ENCODE measurements at regions of chr22 and their contacts with region 1.

Region 1: DNA sequence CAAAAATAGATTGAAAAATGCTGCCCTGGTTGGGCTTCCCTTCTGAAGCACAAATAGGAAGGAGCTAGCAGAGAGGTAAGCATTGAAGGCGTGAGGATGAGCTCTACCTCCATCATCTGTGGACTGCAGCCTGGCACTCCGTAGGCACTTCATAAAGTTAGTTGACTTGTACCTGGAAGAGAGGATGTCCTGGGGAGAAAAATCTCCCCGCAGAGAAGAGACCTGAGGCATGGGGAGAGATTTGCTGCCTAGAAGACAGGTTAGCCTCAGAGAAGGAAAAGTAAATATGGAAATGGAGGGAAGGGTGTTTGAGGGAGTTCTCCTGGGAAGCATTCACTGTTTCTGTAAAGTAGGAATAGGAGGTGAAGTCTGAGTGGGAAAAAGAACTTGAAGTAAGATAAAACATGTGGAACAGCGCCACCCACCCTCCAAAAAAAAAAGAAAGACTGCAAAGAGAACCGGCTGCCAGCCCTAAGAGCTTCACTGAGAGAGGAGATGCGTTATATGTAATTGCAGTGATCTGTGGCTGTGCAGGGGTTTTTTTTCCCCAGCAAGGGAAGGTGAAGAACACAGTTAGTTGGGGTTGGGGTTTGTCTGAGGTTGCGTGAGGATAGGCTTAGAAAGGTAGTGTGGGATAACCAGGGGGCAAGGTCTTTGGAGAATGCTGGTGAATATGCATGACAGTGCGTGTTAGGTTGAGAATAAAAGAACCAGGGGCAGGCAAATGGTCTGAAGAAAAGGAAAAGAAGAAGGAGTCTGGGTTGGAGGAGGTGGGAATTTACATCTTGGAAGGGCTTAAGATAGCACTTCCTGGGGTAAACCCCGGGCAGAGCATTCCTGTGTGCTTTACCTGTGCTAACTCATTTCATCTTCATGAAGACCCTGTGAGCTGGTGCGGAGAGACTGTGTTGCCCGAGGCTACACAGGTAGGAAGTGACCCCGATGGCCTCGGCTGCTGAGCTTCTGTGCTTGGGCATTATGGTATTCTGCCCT is 16.0 kb downstream of the TNRC6B start:
- DNase-seq: no peak
- H3K4me3 ChIP-seq: no peak overlapping the region
- CTCF ChIP-seq: peak; percentile 10

Region 2: DNA sequence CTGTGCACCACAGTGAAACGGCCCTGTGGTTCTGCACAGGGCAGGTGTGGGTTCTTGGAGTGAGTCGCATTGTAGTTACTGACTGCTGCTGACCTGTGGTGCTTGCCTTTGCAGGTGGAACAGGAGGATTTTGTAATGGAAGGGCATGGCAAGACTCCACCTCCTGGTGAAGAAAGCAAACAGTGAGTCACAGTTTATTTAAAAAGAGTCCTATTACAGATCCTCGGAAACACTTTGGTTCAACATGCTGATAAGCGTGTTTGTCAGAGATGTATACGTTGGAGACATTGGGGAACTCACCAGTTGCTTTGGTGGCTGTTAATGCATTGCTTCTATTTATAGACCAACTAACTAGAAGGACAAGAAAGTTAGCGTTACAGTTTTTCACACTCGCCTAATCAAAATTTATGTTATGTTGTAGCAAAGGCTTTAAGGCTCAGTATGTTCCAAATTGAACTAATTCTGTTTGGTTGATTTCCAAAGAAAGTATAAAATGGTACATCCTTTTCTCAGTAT is 37.7 kb before region 1 on chr22:
- CTCF ChIA-PET with region 1: no interaction called
- POLR2A ChIA-PET with region 1: no interaction called
- DNase-seq: no peak
- H3K4me3 ChIP-seq: no peak overlapping the region
- CTCF ChIP-seq: no peak

Region 3: DNA sequence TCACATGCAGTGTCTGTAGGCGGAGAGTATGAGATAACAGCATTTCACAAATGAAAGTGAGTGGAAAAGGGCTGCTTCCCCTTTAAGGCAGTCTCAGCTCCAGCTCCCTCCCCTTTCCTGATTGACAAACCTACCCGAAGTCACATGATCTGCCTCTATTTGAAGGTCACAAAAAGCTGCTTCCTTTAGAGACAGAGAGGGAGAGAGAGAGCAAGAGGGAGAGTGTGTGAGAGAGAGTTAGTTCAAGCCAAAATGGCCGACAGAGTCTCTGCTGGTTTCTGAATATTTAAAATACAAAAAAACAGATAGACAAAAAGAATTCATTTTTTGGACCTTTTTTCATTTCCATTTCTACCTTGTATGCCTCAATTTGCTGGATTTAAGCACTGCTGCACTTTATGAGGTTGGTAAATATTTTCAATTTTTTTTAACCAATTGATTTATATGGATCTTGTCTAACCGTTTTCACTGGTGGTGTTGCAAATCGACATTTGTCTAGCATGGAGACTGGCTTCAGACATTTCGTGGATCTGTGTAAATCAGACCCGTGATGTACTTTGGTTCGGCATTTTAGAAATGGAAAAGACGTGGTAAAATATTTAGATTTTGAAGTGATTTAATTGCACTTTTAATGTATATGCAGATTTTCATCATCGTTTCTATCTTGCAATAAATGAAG is 15.8 kb before region 1 on chr22 and contains the start of gene TNRC6B:
- CTCF ChIA-PET with region 1: interaction called, 18 read pairs
- POLR2A ChIA-PET with region 1: interaction called, 14 read pairs
- DNase-seq: peak; percentile 91
- H3K4me3 ChIP-seq: peak within 1 kb of the TSS; percentile 74
- CTCF ChIP-seq: no peak

Region 4: GRCh38 chr22:40183029-40183581 is 10.6 kb before region 1 on chr22:
- CTCF ChIA-PET with region 1: interaction called, 18 read pairs
- POLR2A ChIA-PET with region 1: interaction called, 14 read pairs
- DNase-seq: peak; percentile 63
- H3K4me3 ChIP-seq: peak overlapping the region; percentile 23
- CTCF ChIP-seq: no peak